Activated B cell treated with CpG ODN at 0.5 μM for 24 hours (primary cell): ENCODE measurements at regions of chr3 and their contacts with region 1.

Region 1: DNA sequence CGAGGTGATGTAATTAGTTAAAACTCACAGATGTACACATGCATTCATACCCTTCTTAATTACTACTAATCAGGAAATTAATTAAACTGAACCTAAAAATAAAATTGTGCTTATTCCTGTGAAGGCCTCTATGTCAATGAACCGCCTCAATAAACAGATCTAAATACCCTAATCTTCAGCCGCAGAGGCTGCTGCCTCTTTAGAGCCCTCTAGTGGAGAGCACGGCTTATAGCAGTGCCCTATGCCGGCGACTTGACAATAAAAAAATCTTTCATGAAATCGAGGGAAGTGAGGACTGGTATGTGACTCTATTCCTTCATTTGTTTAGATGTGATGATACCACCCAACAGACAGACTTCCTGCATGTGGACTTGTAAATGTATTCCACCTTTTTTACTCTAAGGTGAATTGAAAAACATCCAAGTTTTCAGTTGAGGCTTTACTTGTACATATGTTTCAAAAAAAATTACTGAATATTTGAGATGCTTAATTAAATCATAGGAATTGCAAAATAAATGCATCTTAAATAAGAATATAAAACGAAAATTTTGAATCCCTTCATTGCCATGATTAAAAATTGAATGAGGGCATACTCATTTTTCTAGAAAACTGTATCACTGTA is 8.3 kb upstream of the EPHA3 start:
- DNase-seq: no peak
- ATAC-seq: peak; percentile 90
- H3K4me3 Mint-ChIP-seq: no peak overlapping the region
- H3K27ac Mint-ChIP-seq: no peak overlapping the region
- H3K4me1 Mint-ChIP-seq: no peaks in the 10 kb centered on the region
- H3K27me3 Mint-ChIP-seq: peaks cover 7% of the 10 kb centered on the region
- CTCF ChIP-seq: peak; percentile 97

Region 2: DNA sequence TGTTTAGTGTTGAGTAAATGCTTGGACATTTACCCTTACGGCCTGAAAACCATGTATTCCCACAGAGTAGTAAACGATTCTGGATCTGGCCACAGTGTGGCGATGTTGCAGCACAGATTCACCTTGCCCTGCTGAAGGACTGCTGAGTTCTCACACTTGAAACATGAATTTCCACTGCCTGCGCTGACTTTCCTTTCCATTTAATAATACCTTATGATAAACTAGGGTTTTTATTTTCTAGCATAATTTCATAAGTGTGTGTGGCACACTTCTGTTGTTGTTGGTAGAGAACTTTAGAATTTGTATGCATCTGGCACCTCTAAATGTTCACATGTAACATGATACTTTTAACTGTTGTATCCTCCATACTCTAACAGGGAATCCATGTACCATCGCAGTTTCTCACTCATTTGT is 895.4 kb before region 1 on chr3:
- CTCF ChIA-PET with region 1: no interaction called
- POLR2A ChIA-PET with region 1: no interaction called
- intact Hi-C with region 1: loop called (anchors 1 kb)
- DNase-seq: peak; percentile 32
- ATAC-seq: peak; percentile 71
- H3K4me3 Mint-ChIP-seq: no peak overlapping the region
- H3K27ac Mint-ChIP-seq: no peak overlapping the region
- H3K4me1 Mint-ChIP-seq: no peaks in the 10 kb centered on the region
- H3K27me3 Mint-ChIP-seq: peaks cover 2% of the 10 kb centered on the region
- CTCF ChIP-seq: no peak

Region 3: GRCh38 chr3:88219138-88219792 is 879.8 kb before region 1 on chr3:
- CTCF ChIA-PET with region 1: interaction called, 7 read pairs
- POLR2A ChIA-PET with region 1: no interaction called
- intact Hi-C with region 1: loop called (anchors 1 kb)
- DNase-seq: no peak
- ATAC-seq: peak; percentile 64
- H3K4me3 Mint-ChIP-seq: no peak overlapping the region
- H3K27ac Mint-ChIP-seq: no peak overlapping the region
- H3K4me1 Mint-ChIP-seq: peaks cover 5% of the 10 kb centered on the region
- H3K27me3 Mint-ChIP-seq: peaks cover 2% of the 10 kb centered on the region
- CTCF ChIP-seq: no peak

Region 4: DNA sequence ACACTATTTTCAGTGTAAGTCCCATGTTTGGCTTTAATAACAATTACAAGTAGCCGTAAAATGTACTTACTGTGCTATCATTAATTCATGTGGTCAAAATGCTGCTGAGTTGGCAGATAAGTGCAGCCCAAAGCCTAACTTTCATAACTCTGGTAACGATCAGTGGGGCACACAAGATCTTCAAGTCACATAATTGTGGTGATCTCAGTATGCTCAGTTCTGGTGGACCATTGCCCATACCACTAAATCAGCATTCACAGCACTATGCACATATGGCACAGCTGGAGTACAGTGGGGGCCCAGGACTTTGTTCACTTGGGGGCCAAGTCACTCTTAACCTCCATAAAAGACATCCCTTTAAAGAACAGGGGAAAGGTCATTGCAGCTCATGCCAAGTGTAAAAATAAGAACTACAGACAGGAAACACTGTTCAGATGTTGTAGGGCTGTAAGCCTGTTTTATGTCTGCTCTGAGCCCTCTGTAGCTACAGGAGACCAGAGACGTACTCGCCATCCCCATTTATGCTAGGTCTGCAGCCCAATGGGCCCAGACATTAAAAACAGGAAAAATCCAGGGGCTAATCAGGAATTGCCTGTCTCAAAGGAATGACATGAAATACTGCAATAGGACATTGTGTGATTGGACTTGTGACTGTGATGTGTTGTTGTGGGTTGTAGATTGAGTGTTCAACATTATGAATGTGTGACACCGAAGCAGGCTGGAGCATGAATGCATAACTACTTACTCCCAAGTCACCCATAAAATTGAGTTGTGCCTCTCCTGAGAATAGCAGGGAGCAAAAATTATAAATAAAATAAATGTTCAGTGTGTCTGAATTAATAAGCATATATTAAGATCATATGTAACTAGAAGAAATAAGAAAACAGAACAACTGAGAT is 274.2 kb before region 1 on chr3:
- CTCF ChIA-PET with region 1: no interaction called
- POLR2A ChIA-PET with region 1: no interaction called
- intact Hi-C with region 1: no loop called
- DNase-seq: no peak
- ATAC-seq: no peak
- H3K4me3 Mint-ChIP-seq: no peak overlapping the region
- H3K27ac Mint-ChIP-seq: no peak overlapping the region
- H3K4me1 Mint-ChIP-seq: no peaks in the 10 kb centered on the region
- H3K27me3 Mint-ChIP-seq: no peaks in the 10 kb centered on the region
- CTCF ChIP-seq: no peak

Region 5: DNA sequence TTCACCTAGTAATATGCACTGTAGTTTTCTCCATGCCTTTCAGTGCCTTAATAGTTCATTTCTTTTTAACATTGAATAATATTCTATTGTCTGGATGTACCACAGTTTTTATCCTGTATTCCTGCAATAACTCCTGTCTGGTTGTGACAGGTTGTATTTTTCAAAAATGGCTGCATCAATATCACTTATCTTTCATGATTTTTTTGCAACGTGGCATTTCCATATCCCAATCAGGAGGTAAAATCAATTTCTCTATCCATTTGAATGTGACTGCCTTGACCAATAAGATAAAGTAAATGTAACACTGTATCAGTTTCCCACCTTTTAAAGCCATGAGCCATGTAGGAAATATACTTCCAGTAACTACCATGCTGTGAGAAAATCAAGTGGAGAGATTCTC is 19.1 kb before region 1 on chr3:
- CTCF ChIA-PET with region 1: no interaction called
- POLR2A ChIA-PET with region 1: no interaction called
- intact Hi-C with region 1: no loop called
- DNase-seq: no peak
- ATAC-seq: no peak
- H3K4me3 Mint-ChIP-seq: no peak overlapping the region
- H3K27ac Mint-ChIP-seq: no peak overlapping the region
- H3K4me1 Mint-ChIP-seq: no peaks in the 10 kb centered on the region
- H3K27me3 Mint-ChIP-seq: no peaks in the 10 kb centered on the region
- CTCF ChIP-seq: no peak

Region 6: DNA sequence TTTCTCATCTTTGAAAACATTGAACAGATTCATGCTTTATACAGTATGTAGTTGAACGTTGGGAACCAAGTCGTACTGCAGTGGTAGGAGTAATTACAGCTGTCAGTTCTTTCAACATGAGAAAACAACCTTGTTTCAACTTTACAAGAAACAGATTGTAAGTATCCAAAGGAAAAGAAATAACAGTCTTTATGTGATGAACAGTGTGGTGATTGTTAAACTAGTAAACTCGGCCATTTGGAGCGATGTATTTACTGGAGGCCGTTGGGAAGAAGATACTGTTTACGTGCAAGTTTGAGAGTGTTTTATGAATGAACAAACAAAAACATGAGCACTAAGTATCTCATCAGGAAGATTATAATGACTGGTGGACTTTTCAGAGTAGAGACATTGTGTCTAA is 56.7 kb after region 1 on chr3:
- CTCF ChIA-PET with region 1: no interaction called
- POLR2A ChIA-PET with region 1: no interaction called
- intact Hi-C with region 1: loop called (anchors 10 kb)
- DNase-seq: no peak
- ATAC-seq: no peak
- H3K4me3 Mint-ChIP-seq: no peak overlapping the region
- H3K27ac Mint-ChIP-seq: no peak overlapping the region
- H3K4me1 Mint-ChIP-seq: no peaks in the 10 kb centered on the region
- H3K27me3 Mint-ChIP-seq: no peaks in the 10 kb centered on the region
- CTCF ChIP-seq: no peak

Region 7: DNA sequence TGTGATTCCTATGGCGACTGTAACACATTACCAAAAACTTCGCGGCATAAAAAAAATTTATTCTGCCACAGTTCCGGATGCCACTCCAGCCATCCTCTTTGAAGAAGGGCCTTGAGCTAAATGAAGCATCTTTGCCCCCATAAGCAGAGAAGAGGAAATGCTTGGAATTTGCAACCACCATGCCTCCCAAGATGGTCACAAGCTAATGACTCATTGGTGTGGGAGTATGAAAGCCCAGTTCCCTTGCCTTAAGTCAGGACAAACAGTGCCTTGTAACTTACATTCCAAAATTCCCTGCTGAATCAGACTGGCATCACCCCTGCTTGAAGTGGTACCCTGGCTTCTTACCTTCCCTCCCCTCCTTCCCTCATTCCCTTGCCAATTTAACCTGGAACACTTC is 1085.8 kb after region 1 on chr3:
- CTCF ChIA-PET with region 1: no interaction called
- POLR2A ChIA-PET with region 1: no interaction called
- intact Hi-C with region 1: loop called (anchors 5 kb)
- DNase-seq: no peak
- ATAC-seq: no peak
- H3K4me3 Mint-ChIP-seq: no peak overlapping the region
- H3K27ac Mint-ChIP-seq: no peak overlapping the region
- H3K4me1 Mint-ChIP-seq: no peaks in the 10 kb centered on the region
- H3K27me3 Mint-ChIP-seq: no peaks in the 10 kb centered on the region
- CTCF ChIP-seq: no peak